GM10248 (cell line): ENCODE measurements at regions of chr15 and their contacts with region 1.

Region 1: DNA sequence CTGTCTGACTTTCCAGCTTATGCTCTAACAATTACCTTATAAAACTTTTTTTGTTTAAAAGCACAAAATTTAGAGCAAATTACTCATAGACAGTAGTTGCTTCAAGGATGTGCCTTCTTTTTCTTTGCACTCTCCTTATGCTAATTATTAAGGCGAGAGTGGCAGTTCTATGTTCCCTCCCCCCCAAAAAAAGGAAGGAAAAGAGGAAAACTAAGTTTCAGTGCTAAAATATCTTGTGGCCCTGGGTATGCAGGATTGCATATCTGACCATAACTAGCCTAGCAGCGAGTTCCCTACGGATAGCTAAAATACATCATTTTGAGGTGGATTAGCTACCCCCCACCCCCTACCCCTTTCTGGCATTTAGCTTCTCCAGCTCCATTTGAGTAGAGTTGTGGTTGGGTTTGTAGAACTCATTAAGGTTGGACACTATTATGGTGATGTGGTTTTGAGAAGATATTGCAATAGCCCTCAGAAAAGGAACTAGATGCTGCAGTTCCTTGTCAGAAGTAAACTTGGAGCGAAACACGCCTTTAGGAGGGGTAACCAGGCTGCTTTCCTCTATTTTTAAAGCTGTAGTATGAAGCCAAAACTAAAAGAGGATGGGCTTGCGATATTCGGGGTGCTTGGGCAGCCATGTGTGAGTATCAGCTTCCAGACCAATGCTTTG is 174.6 kb downstream of the AKAP13 start:
- DNase-seq: no peak
- CTCF ChIP-seq: no peak

Region 2: DNA sequence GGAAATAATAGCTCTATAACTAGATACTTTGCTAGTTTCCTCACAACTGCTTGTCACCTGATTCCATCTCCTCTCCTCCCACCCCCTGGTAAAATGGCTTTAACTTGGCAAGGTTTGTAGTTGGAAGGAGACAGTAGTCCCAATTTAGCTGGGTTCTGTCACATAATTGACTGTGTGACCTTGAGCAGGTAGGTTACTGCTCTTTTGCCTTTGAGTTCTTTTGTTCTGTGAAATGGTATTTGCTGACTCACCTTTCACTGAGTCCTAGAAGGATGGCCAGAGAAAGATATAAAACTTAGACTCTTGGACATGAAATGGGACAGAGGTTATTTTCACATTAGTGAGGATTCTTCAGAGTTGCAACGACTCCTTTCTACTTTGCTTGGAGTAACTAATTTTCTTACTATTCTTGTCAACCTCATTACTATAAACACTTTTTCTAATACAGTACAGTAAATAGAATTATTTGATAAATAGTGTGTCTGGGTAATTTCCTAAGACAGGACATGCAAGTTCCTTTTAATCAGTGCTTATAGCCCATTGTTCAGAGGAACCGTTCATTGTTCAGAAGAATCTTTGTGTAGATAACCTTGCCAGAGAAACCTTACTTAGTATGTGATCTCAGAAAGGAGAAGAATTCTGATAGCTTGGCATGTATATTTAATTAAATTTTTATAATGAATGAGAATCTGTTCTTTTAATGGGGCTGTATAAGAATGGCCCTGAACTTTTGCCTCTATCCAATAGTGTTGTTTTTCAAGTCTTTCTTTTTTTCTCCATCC is 160.2 kb before region 1 on chr15:
- CTCF ChIA-PET with region 1: no interaction called
- POLR2A ChIA-PET with region 1: no interaction called
- DNase-seq: no peak
- CTCF ChIP-seq: no peak

Region 3: GRCh38 chr15:85540085-85540797 is 14.7 kb before region 1 on chr15:
- CTCF ChIA-PET with region 1: interaction called, 10 read pairs
- POLR2A ChIA-PET with region 1: no interaction called
- DNase-seq: no peak
- CTCF ChIP-seq: no peak